GM12878 (cell line): ENCODE measurements at regions of chr16 and their contacts with region 1.

Region 1: DNA sequence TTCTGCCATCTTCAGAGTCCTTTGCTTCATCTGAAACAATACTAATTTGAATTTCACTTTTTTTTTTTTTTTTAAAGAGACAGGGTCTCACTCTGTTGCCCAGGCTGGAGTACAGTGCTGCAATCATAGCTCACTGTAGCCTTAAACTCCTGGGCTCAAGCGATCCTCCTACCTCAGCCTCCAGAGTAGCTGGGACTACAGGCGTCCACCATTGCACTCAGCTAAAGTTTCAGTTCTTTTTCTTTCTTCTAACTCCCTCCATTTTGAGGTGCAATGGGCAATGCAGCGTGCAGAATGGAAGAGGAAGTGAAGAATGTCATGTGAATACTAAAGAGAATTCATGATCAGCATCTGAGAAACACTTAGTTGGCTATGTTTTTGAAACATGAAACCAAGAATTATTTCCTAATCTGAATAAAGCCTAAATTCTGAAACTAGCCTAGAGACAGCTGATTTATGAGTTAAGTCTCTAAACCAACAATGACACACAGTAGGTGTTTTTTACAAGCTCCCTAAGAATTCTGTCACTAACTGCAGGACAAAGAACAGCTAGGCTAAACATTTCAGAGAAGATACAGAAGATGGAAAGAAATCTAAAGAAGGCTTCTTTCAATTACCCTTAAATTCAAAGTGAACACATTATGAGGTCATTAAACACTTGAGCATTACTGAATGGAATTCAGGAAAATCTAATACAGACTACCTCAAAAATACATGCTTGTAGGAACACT is 20.9 kb downstream of the SNN start:
- DNase-seq: peak; percentile 89
- ATAC-seq: peak; percentile 95
- H3K4me3 ChIP-seq: no peak overlapping the region
- H3K27ac ChIP-seq: peak overlapping the region; percentile 68
- H3K4me1 ChIP-seq: peaks cover 52% of the 10 kb centered on the region
- H3K27me3 ChIP-seq: no peaks in the 10 kb centered on the region
- CTCF ChIP-seq: no peak
- EP300 ChIP-seq: peak; percentile 84 to 95; a peak in 3 of 4 replicates
- POLR2A ChIP-seq: no peak
- RAD21 ChIP-seq: 0 out of 2 replicates have a peak, but pooled peaks have one; percentile 2

Region 2: DNA sequence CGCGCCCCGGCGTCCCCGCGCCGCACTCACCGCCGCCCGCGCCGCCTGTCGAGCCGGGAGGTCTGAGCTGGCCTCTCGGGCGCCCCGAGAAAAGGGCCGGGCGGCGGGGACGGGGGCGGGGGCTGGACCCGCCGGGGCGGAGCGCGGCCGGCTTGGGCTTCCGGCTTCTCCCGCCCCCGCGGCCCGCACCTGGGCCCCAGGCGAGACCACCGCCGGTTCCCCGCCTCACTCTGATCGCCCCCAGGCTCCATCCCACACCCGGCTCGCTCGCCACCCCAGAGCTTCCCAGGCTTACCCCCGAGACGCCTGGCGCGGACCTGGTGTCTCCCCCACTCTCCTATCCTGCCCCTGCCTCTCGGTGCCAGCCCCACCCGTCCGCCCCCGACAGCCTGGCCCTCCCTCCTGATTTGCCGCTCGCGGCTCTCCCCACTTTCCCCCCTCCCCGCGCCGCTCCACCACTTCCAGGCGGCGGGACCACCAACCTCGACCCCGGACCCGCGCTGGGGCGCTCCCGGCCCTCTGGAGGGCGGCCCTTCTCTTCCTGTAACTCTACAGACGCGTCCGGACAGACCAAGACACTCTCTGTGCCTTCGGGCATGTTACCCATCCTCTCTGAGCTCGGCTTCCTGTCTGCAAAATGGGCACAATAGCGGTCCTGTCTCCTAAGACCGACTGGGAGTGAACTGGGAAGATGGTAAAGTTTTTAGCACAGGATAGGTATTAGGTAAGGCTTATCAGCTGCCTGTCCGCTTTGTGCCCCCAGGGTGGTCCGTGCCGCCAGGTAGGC is 102.1 kb before region 1 on chr16 and contains the start of gene LITAF:
- CTCF ChIA-PET with region 1: no interaction called
- POLR2A ChIA-PET with region 1: interaction called, 7 read pairs
- RAD21 ChIA-PET with region 1: interaction called, 16 read pairs
- SMC1A ChIA-PET with region 1: interaction called, 6 read pairs
- in situ Hi-C with region 1: no loop called
- intact Hi-C with region 1: no loop called
- DNase-seq: no peak
- ATAC-seq: peak; percentile 78
- H3K4me3 ChIP-seq: peak within 1 kb of the TSS; percentile 97
- H3K27ac ChIP-seq: peak within 1 kb of the TSS; percentile 92
- H3K4me1 ChIP-seq: peaks cover 10% of the 10 kb centered on the region; the same call in 1 of the 2 replicates
- H3K27me3 ChIP-seq: no peaks in the 10 kb centered on the region
- CTCF ChIP-seq: peak in 1 of 3 experiments; percentile 19; a peak in 1 of 6 replicates
- EP300 ChIP-seq: no peak
- POLR2A ChIP-seq: peak; percentile 81
- RAD21 ChIP-seq: peak; percentile 33; the same call in 1 of the 2 replicates
- polyA plus RNA-seq, gene LITAF: 144 to 195 TPM

Region 3: GRCh38 chr16:11667824-11668622 is 21.2 kb before region 1 on chr16 and contains the start of gene SNN:
- CTCF ChIA-PET with region 1: interaction called, 6 read pairs
- POLR2A ChIA-PET with region 1: interaction called, 75 read pairs
- RAD21 ChIA-PET with region 1: interaction called, 34 read pairs
- SMC1A ChIA-PET with region 1: interaction called, 19 read pairs
- in situ Hi-C with region 1: no loop called
- intact Hi-C with region 1: no loop called
- DNase-seq: no peak
- ATAC-seq: peak; percentile 70
- H3K4me3 ChIP-seq: peak within 1 kb of the TSS; percentile 67
- H3K27ac ChIP-seq: peak within 1 kb of the TSS; percentile 88
- H3K4me1 ChIP-seq: peaks cover 45% of the 10 kb centered on the region
- H3K27me3 ChIP-seq: no peaks in the 10 kb centered on the region
- CTCF ChIP-seq: no peak
- EP300 ChIP-seq: no peak
- POLR2A ChIP-seq: peak; percentile 59; the same call in 1 of the 2 replicates
- RAD21 ChIP-seq: no peak
- polyA plus RNA-seq, gene SNN: 2.2 to 5.2 TPM

Region 4: GRCh38 chr16:11700264-11701029 is 11.3 kb after region 1 on chr16:
- CTCF ChIA-PET with region 1: interaction called, 5 read pairs
- POLR2A ChIA-PET with region 1: interaction called, 4 read pairs
- RAD21 ChIA-PET with region 1: interaction called, 4 read pairs
- SMC1A ChIA-PET with region 1: interaction called, 21 read pairs
- in situ Hi-C with region 1: no loop called
- intact Hi-C with region 1: no loop called
- DNase-seq: no peak
- ATAC-seq: no peak
- H3K4me3 ChIP-seq: no peak overlapping the region
- H3K27ac ChIP-seq: no peak overlapping the region
- H3K4me1 ChIP-seq: no peaks in the 10 kb centered on the region
- H3K27me3 ChIP-seq: no peaks in the 10 kb centered on the region
- CTCF ChIP-seq: no peak
- EP300 ChIP-seq: no peak
- POLR2A ChIP-seq: no peak
- RAD21 ChIP-seq: no peak

Region 5: DNA sequence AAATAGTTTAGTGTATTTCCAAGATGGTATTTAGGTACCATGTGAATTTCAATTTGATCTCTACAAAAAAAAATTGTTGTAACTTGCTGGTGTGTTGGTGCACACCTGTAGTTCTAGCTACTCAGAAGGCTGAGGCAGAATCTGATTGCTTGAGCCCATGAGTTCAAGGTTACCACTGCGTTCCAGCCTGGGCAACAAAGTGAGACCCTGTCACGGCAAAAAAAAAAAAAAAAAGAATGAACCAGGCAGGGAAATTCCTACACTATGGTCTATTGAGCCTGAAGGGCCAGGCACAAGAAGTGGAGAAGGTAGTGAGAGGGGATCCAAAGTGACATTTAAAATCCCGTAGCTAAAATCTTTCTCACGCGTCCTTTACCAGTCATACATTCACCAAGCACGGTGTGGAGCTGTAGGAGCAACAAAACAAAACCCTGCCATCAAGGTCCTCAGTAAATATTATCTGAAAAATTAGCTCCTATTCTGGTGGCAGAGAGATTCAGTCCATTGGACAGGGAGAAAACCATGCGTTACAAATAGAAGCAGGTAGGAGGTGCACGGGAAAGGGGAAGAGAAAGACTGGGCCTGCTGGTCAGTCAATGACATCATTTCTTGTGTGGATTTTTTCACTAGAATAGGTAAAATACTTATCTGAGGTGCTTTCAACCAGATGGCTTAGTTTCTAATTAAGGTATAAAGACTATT is 26.2 kb after region 1 on chr16:
- CTCF ChIA-PET with region 1: interaction called, 30 read pairs
- POLR2A ChIA-PET with region 1: interaction called, 5 read pairs
- RAD21 ChIA-PET with region 1: interaction called, 8 read pairs
- SMC1A ChIA-PET with region 1: interaction called, 26 read pairs
- in situ Hi-C with region 1: no loop called
- intact Hi-C with region 1: no loop called
- DNase-seq: no peak
- ATAC-seq: peak; percentile 80
- H3K4me3 ChIP-seq: no peak overlapping the region
- H3K27ac ChIP-seq: peak overlapping the region; percentile 48; the same call in 1 of the 2 replicates
- H3K4me1 ChIP-seq: peaks cover 16% of the 10 kb centered on the region
- H3K27me3 ChIP-seq: no peaks in the 10 kb centered on the region
- CTCF ChIP-seq: 0 out of 6 replicates have a peak, but pooled peaks of 1 of the 3 experiments have one; percentile 3
- EP300 ChIP-seq: no peak
- POLR2A ChIP-seq: no peak
- RAD21 ChIP-seq: peak; percentile 36

Region 6: DNA sequence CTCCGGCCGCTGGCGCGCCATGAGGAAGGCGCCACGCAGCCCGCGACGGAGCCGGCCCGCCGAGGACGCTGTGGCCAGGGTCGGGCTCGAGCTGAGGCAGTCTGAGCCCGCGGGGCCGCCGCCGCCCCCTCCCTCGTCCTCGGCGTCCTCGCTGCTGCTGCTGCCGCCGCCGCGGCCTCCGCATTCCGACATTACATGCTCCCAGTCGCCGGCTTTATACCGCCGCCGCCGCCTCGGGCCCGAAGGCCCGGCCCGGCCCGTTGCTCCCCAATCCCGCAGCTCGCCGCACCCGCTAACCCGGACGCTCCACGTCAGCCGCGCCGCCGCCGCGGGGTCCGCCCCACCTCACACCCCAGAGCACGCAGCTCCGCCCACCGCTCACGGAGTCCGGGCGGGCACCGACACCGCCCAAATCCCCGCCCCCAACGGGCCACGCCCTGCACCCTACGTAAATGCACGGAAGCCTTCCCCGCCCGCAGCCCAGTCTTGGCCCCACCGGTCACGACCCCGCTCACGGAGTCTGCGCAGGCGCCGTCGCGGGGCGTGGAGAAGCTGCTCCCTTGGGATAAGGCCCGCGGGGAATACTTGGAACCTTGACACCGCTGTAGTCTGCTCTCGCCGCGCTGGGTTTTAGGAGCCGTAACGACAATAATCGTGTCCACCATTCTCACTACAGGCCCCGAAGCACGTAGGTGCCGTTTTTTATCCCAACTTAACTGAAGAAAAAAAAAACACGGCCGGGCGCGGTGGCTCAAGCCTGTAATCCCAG is 53.5 kb after region 1 on chr16 and contains the start of gene TXNDC11:
- CTCF ChIA-PET with region 1: interaction called, 3 read pairs
- POLR2A ChIA-PET with region 1: interaction called, 9 read pairs
- RAD21 ChIA-PET with region 1: interaction called, 15 read pairs
- SMC1A ChIA-PET with region 1: interaction called, 4 read pairs
- in situ Hi-C with region 1: no loop called
- intact Hi-C with region 1: no loop called
- DNase-seq: peak; percentile 93
- ATAC-seq: peak; percentile 88
- H3K4me3 ChIP-seq: peak within 1 kb of the TSS; percentile 83
- H3K27ac ChIP-seq: peak within 1 kb of the TSS; percentile 75
- H3K4me1 ChIP-seq: peaks cover 13% of the 10 kb centered on the region
- H3K27me3 ChIP-seq: no peaks in the 10 kb centered on the region
- CTCF ChIP-seq: no peak
- EP300 ChIP-seq: peak; percentile 18 to 38; a peak in 1 of 4 replicates
- POLR2A ChIP-seq: peak; percentile 98
- RAD21 ChIP-seq: no peak
- polyA plus RNA-seq, gene TXNDC11: 1.7 to 7.3 TPM

Region 7: GRCh38 chr16:11797166-11797956 is 108.2 kb after region 1 on chr16 and contains the start of gene ZC3H7A:
- CTCF ChIA-PET with region 1: interaction called, 15 read pairs
- POLR2A ChIA-PET with region 1: interaction called, 8 read pairs
- RAD21 ChIA-PET with region 1: interaction called, 13 read pairs
- SMC1A ChIA-PET with region 1: interaction called, 6 read pairs
- in situ Hi-C with region 1: no loop called
- intact Hi-C with region 1: no loop called
- DNase-seq: peak; percentile 82
- ATAC-seq: peak; percentile 93
- H3K4me3 ChIP-seq: peak within 1 kb of the TSS; percentile 99
- H3K27ac ChIP-seq: peak within 1 kb of the TSS; percentile 95
- H3K4me1 ChIP-seq: peaks cover 25% of the 10 kb centered on the region
- H3K27me3 ChIP-seq: no peaks in the 10 kb centered on the region
- CTCF ChIP-seq: peak; percentile 44 to 78 (median 50); a peak in 5 of 6 replicates
- EP300 ChIP-seq: no peak
- POLR2A ChIP-seq: peak; percentile 97
- RAD21 ChIP-seq: no peak
- polyA plus RNA-seq, gene ZC3H7A: 46.3 to 77.8 TPM

Region 8: GRCh38 chr16:11880007-11880406 is 190.8 kb after region 1 on chr16:
- CTCF ChIA-PET with region 1: no interaction called
- POLR2A ChIA-PET with region 1: no interaction called
- RAD21 ChIA-PET with region 1: no interaction called
- SMC1A ChIA-PET with region 1: no interaction called
- in situ Hi-C with region 1: no loop called
- intact Hi-C with region 1: no loop called
- DNase-seq: no peak
- ATAC-seq: no peak
- H3K4me3 ChIP-seq: no peak overlapping the region
- H3K27ac ChIP-seq: no peak overlapping the region
- H3K4me1 ChIP-seq: no peaks in the 10 kb centered on the region
- H3K27me3 ChIP-seq: no peaks in the 10 kb centered on the region
- CTCF ChIP-seq: no peak
- EP300 ChIP-seq: no peak
- POLR2A ChIP-seq: no peak
- RAD21 ChIP-seq: no peak